Mucosa of descending colon (tissue), 3 donors: ENCODE measurements at regions of chr22 and their contacts with region 1.

Region 1: GRCh38 chr22:20456064-20456721 is 18.6 kb upstream of the SCARF2 start:
- DNase-seq: peak; percentile 66 to 76 (median 70)
- ATAC-seq: peak; percentile 96
- H3K4me3 ChIP-seq: no peak overlapping the region
- H3K4me1 ChIP-seq: no peaks in the 10 kb centered on the region
- CTCF ChIP-seq: peak; percentile 86

Region 2: GRCh38 chr22:20418211-20418788 is 37.9 kb before region 1 on chr22:
- intact Hi-C with region 1: loop called (anchors 5 kb)
- DNase-seq: peak; percentile 63 to 80 (median 79)
- ATAC-seq: peak; percentile 91
- H3K4me3 ChIP-seq: no peak overlapping the region
- H3K4me1 ChIP-seq: peaks cover 6% of the 10 kb centered on the region
- CTCF ChIP-seq: peak; percentile 80